Gastrocnemius medialis (tissue), 4 donors: ENCODE measurements at regions of chr18 and their contacts with region 1.

Region 1: GRCh38 chr18:55096261-55096951 is 137.1 kb upstream of the CCDC68 start:
- DNase-seq: no peak
- ATAC-seq: peak in 1 of 2 donors; percentile 66
- H3K4me3 ChIP-seq: no peak overlapping the region
- H3K27ac ChIP-seq: no peak overlapping the region
- H3K4me1 ChIP-seq: no peaks in the 10 kb centered on the region
- H3K27me3 ChIP-seq: no peaks in the 10 kb centered on the region
- CTCF ChIP-seq: peak in 4 of 5 experiments; percentile 6 to 38 (median 18)
- POLR2A ChIP-seq: no peak

Region 2: DNA sequence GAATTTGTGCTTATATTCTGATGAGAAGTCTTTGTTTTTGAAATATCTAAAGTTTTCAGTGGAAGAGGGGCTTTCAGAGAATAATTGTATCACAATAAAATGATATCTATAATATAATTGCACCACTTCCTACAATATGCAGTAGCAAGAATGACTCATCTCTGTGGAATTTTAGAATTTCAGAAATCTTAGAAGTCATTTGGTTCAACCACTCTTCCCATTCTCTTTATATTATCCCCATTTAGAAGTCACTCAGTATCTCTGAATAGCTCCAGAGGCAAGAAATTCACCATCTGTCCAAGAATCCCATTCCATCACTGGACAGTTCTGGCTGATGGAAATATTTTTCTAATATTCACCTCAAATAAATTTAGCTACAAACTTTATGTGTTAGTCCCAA is 77.8 kb before region 1 on chr18:
- in situ Hi-C with region 1: loop called in 1 of 4 experiments (anchors 25 kb)
- intact Hi-C with region 1: no loop called
- DNase-seq: no peak
- ATAC-seq: no peak
- H3K4me3 ChIP-seq: no peak overlapping the region
- H3K27ac ChIP-seq: no peak overlapping the region
- H3K4me1 ChIP-seq: no peaks in the 10 kb centered on the region
- H3K27me3 ChIP-seq: no peaks in the 10 kb centered on the region
- CTCF ChIP-seq: no peak
- POLR2A ChIP-seq: no peak

Region 3: GRCh38 chr18:55152801-55153200 is 56.4 kb after region 1 on chr18:
- in situ Hi-C with region 1: no loop called
- intact Hi-C with region 1: no loop called
- DNase-seq: no peak
- ATAC-seq: no peak
- H3K4me3 ChIP-seq: no peak overlapping the region
- H3K27ac ChIP-seq: no peak overlapping the region
- H3K4me1 ChIP-seq: no peaks in the 10 kb centered on the region
- H3K27me3 ChIP-seq: no peaks in the 10 kb centered on the region
- CTCF ChIP-seq: no peak
- POLR2A ChIP-seq: no peak